ENCODE measurements at regions of chr9 and their contacts with region 1.

Region 1: GRCh38 chr9:107340920-107341632 is 58.0 kb downstream of the RAD23B start:
- DNase-seq: peak; percentile 60 to 91 (median 82)
- ATAC-seq: peak; percentile 74
- H3K4me3 ChIP-seq: no peak overlapping the region
- H3K4me3 Mint-ChIP-seq: no peak overlapping the region
- H3K27ac ChIP-seq: no peak overlapping the region
- H3K27ac Mint-ChIP-seq: no peak overlapping the region
- H3K4me1 ChIP-seq: no peaks in the 10 kb centered on the region
- H3K4me1 Mint-ChIP-seq: peaks cover 8% of the 10 kb centered on the region
- H3K27me3 ChIP-seq: no peaks in the 10 kb centered on the region
- H3K27me3 Mint-ChIP-seq: no peaks in the 10 kb centered on the region
- CTCF ChIP-seq: peak; percentile 90

Region 2: DNA sequence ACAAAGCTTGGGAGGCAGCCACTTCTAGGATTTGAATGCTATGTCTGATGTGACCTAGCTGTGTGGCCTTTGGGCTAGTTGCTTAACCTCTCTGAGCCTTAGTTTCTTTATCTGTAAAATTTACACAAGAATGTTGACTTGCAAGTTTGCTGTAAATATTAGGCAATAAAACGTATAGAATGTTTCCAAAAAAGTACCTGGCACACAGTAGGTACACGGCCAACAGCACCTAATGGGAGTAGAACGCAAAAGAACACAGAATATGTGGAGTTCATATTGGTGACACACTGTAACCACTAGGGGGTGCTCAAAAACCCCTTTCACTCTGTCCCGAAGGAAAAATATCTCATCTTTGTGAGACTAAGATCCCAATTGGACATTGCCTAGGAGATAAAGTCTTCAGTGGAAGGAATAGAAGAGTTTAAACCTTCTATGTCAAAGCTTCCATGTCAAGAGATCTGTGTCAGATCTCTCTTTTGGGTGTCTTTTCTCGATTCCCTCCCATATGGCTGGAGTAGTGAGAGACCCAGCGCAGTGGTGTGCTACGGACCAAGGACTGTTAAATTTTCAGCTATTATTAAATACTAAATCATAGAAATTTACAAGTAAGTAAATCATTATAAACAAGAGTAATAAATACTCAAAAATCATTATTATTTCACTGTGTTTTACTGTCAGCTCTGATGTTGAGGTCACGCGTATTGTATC is 203.4 kb before region 1 on chr9:
- CTCF ChIA-PET with region 1: interaction called, 16 read pairs
- POLR2A ChIA-PET with region 1: no interaction called
- intact Hi-C with region 1: loop called in 1 of 2 experiments (anchors 1 kb)
- DNase-seq: peak in 2 of 9 experiments; percentile 17 to 28
- ATAC-seq: no peak
- H3K4me3 ChIP-seq: no peak overlapping the region
- H3K4me3 Mint-ChIP-seq: no peak overlapping the region
- H3K27ac ChIP-seq: no peak overlapping the region
- H3K27ac Mint-ChIP-seq: no peak overlapping the region
- H3K4me1 ChIP-seq: no peaks in the 10 kb centered on the region
- H3K4me1 Mint-ChIP-seq: no peaks in the 10 kb centered on the region
- H3K27me3 ChIP-seq: no peaks in the 10 kb centered on the region
- H3K27me3 Mint-ChIP-seq: peaks cover 10% of the 10 kb centered on the region
- CTCF ChIP-seq: peak; percentile 60

Region 3: GRCh38 chr9:107172160-107172978 is 168.7 kb before region 1 on chr9:
- CTCF ChIA-PET with region 1: interaction called, 7 read pairs
- POLR2A ChIA-PET with region 1: no interaction called
- intact Hi-C with region 1: loop called in 1 of 2 experiments (anchors 10 kb)
- DNase-seq: peak; percentile 8 to 66 (median 55)
- ATAC-seq: peak; percentile 65
- H3K4me3 ChIP-seq: no peak overlapping the region
- H3K4me3 Mint-ChIP-seq: no peak overlapping the region
- H3K27ac ChIP-seq: no peak overlapping the region
- H3K27ac Mint-ChIP-seq: no peak overlapping the region
- H3K4me1 ChIP-seq: no peaks in the 10 kb centered on the region
- H3K4me1 Mint-ChIP-seq: no peaks in the 10 kb centered on the region
- H3K27me3 ChIP-seq: peaks cover 0 to 3% of the 10 kb centered on the region in 2 experiments
- H3K27me3 Mint-ChIP-seq: peaks cover 9% of the 10 kb centered on the region
- CTCF ChIP-seq: peak; percentile 68

Region 4: GRCh38 chr9:107243751-107244150 is 97.3 kb before region 1 on chr9:
- CTCF ChIA-PET with region 1: interaction called, 166 read pairs
- POLR2A ChIA-PET with region 1: no interaction called
- intact Hi-C with region 1: loop called (anchors 1 kb)
- DNase-seq: peak in 6 of 9 experiments; percentile 3 to 32 (median 18)
- ATAC-seq: peak; percentile 77
- H3K4me3 ChIP-seq: no peak overlapping the region
- H3K4me3 Mint-ChIP-seq: no peak overlapping the region
- H3K27ac ChIP-seq: no peak overlapping the region
- H3K27ac Mint-ChIP-seq: no peak overlapping the region
- H3K4me1 ChIP-seq: peaks cover 5% of the 10 kb centered on the region
- H3K4me1 Mint-ChIP-seq: peaks cover 13% of the 10 kb centered on the region
- H3K27me3 ChIP-seq: no peaks in the 10 kb centered on the region
- H3K27me3 Mint-ChIP-seq: no peaks in the 10 kb centered on the region
- CTCF ChIP-seq: no peak

Region 5: DNA sequence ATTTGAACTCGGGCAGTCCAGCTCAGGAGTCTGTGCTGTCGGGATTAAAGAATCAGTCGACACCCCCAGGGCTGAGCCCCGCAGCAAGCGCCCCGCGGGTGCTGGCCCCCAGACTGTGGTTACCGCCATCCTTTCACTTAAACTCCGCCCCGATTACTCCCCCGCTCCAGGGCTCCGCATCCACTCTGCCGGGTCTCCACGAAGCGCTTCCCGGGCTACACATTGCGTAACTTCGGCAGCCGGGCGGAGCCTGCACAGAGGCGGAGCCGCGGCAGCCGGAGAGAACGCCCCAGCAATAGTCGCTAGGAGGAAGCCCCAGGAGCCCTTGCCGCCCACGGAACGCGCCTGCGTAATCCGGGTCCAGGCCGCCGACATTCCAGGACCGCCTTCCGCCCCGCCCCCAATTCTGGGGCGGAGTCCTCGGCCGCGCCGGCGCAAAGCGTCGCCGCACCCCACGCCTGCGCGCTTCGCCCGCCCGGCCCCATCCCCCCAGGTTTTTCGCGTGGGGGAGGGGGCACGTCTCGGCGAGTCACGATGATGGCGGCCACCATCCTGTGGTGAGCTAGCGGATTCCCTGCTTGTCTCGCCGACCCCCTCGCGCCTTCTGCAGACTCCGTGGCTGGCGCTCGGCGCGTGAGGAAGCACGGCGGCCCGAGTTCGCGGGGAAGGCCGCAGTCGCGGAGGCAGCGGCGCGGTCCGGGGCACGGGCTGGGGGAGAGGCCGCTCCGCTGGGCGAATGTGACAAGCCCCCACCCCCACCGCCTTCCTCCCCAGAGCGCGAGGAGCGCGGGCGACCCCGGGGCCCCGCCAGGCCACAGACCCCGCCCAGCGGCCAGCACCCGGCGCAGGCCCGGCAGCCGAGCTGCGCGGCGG is 58.1 kb before region 1 on chr9 and contains the start of gene RAD23B:
- CTCF ChIA-PET with region 1: interaction called, 14 read pairs
- POLR2A ChIA-PET with region 1: interaction called, 4 read pairs
- intact Hi-C with region 1: loop called in 1 of 2 experiments (anchors 1 kb)
- DNase-seq: peak; percentile 96 to 99 (median 98)
- ATAC-seq: peak; percentile 87
- H3K4me3 ChIP-seq: peak within 1 kb of the TSS; percentile 69 to 90
- H3K4me3 Mint-ChIP-seq: peak within 1 kb of the TSS; percentile 96
- H3K27ac ChIP-seq: peak within 1 kb of the TSS; percentile 81 to 87
- H3K27ac Mint-ChIP-seq: peak within 1 kb of the TSS; percentile 94
- H3K4me1 ChIP-seq: peaks cover 37% of the 10 kb centered on the region
- H3K4me1 Mint-ChIP-seq: peaks cover 42% of the 10 kb centered on the region
- H3K27me3 ChIP-seq: peaks cover 0 to under 1% of the 10 kb centered on the region in 2 experiments
- H3K27me3 Mint-ChIP-seq: no peaks in the 10 kb centered on the region
- CTCF ChIP-seq: no peak
- total RNA-seq, gene RAD23B: 82.9 to 91.0 TPM

Region 6: GRCh38 chr9:107351382-107352045 is 10.4 kb after region 1 on chr9:
- CTCF ChIA-PET with region 1: interaction called, 13 read pairs
- POLR2A ChIA-PET with region 1: no interaction called
- intact Hi-C with region 1: no loop called
- DNase-seq: no peak
- ATAC-seq: no peak
- H3K4me3 ChIP-seq: no peak overlapping the region
- H3K4me3 Mint-ChIP-seq: no peak overlapping the region
- H3K27ac ChIP-seq: no peak overlapping the region
- H3K27ac Mint-ChIP-seq: no peak overlapping the region
- H3K4me1 ChIP-seq: no peaks in the 10 kb centered on the region
- H3K4me1 Mint-ChIP-seq: no peaks in the 10 kb centered on the region
- H3K27me3 ChIP-seq: peaks cover 0 to 2% of the 10 kb centered on the region in 2 experiments
- H3K27me3 Mint-ChIP-seq: peaks cover 29% of the 10 kb centered on the region
- CTCF ChIP-seq: no peak